CD8-positive, alpha-beta memory T cell (primary cell): ENCODE measurements at regions of chr10 and their contacts with region 1.

Region 1: GRCh38 chr10:4849555-4850242 is 23.7 kb downstream of the AKR1E2 start:
- DNase-seq: peak; percentile 61 to 82 (median 70)
- H3K4me3 ChIP-seq: no peak overlapping the region
- H3K4me3 Mint-ChIP-seq: peak overlapping the region in 1 of 7 donors; percentile 45
- H3K27ac ChIP-seq: no peak overlapping the region
- H3K27ac Mint-ChIP-seq: peak overlapping the region in 2 of 8 donors; percentile 38 to 78
- H3K4me1 ChIP-seq: no peaks in the 10 kb centered on the region
- H3K4me1 Mint-ChIP-seq: peaks cover 5 to 7% (median 5%) of the 10 kb centered on the region in 3 donors
- H3K27me3 ChIP-seq: no peaks in the 10 kb centered on the region
- H3K27me3 Mint-ChIP-seq: peaks cover 2 to 9% of the 10 kb centered on the region in 2 donors

Region 2: DNA sequence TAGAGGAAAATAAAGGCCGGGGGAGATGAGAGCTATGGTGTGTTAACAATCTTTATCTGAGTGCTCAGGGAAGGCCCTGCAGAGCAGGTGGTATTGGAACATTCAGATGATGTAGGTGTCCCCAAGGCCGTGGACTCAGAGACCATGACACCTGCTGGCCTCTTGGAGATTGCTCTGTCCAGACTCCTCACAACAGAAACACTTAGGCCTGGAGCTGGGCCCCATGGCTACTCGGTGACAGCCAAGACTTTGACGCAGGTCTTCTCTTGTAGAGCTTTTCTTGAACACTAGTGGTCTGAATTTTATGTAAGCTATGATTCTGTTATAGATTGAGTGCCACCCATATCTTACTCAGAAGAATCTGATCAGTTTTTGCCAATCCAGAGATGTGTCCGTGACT is 10.3 kb before region 1 on chr10:
- CTCF ChIA-PET with region 1: interaction called, 44 read pairs
- POLR2A ChIA-PET with region 1: no interaction called
- DNase-seq: no peak
- H3K4me3 ChIP-seq: no peak overlapping the region
- H3K4me3 Mint-ChIP-seq: no peak overlapping the region
- H3K27ac ChIP-seq: no peak overlapping the region
- H3K27ac Mint-ChIP-seq: no peak overlapping the region
- H3K4me1 ChIP-seq: peaks cover 31% of the 10 kb centered on the region
- H3K4me1 Mint-ChIP-seq: peaks cover 8 to 22% (median 21%) of the 10 kb centered on the region in 3 donors
- H3K27me3 ChIP-seq: no peaks in the 10 kb centered on the region
- H3K27me3 Mint-ChIP-seq: peaks cover 6 to 11% of the 10 kb centered on the region in 2 donors

Region 3: DNA sequence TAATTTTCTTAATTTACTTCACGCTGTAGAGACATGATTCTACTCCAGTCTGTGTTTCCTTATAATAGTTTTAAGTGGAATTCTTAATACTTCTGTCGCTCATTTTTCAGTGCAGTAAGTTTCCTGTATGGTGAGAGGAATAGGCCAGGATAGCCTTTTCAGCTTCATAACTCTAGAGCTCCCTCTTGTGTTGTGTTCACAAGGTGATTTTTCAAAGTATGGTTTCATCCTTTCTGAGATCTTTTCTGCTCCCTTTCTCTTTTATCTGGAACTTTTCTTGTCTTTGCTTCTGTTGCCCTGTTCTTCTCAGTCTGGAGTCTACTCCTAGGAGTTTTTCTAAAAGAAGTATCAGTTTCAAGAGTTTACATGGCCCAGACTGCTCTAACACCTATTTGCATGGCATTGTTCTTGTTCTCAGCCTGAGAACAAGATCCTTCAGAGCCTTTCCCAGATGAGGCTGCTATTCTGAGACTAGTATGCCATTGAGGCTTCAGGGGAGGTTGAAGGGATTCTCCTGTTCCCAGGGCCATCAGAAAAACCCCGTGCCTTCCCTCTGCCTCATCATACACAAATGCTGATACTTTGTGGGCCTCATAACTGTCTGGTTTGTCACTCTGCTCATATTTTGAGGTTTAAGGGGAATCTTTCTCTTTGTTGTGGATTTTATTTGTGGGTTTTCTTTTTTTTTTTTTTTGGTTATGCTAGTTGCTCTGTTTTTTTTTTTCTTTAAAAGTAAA is 584.5 kb after region 1 on chr10:
- CTCF ChIA-PET with region 1: interaction called, 28 read pairs
- POLR2A ChIA-PET with region 1: no interaction called
- DNase-seq: peak in 2 of 5 donors; percentile 29 to 31
- H3K4me3 ChIP-seq: no peak overlapping the region
- H3K4me3 Mint-ChIP-seq: peak overlapping the region in 3 of 7 donors; percentile 25 to 48 (median 34)
- H3K27ac ChIP-seq: no peak overlapping the region
- H3K27ac Mint-ChIP-seq: peak overlapping the region in 5 of 8 donors; percentile 2 to 74 (median 40)
- H3K4me1 ChIP-seq: peaks cover 5% of the 10 kb centered on the region
- H3K4me1 Mint-ChIP-seq: peaks cover 6 to 12% (median 11%) of the 10 kb centered on the region in 3 donors
- H3K27me3 ChIP-seq: no peaks in the 10 kb centered on the region
- H3K27me3 Mint-ChIP-seq: peaks cover 0 to 3% of the 10 kb centered on the region in 2 donors